ENCODE measurements at regions of chr19 and their contacts with region 1.

Region 1: DNA sequence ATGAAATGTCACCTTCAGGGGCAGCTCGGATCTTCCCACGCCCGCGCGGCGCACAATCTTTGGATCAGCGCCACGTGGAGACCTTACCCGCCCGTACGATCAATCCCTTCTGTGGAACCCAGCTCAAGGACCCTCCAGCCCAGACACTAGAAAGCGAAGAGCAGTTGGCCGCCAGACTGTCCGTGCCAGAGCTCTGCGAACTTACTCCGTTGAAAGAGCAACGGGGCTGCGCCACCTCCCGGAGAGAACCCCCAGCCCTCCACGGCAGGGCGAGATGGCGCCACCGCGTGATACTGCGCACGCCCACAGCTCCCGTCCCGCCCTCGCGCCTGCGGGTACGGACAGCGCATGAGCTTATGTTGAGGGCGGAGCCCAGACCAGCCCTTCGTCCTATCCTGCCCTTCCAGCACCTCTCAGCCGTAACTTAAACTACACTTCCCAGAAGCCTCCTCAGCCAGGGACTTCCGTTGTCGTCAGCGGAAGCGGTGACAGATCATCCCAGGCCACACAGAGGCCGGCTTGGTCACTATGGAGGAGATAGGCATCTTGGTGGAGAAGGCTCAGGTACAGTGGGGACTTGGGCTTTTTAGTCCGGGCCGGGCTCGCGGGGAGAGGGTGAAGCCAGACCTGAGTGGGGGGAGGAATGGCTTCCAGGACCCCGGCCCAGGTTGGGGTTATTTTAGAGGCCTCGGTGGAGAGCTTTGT is at the start of gene PSMC4:
- ATAC-seq: peak; percentile 93 to 98 (median 98)
- H3K4me3 ChIP-seq: peak within 1 kb of the TSS; percentile 69 to 91 (median 88)
- H3K27ac ChIP-seq: peak within 1 kb of the TSS; percentile 85 to 96
- H3K4me1 ChIP-seq: peaks cover 10 to 11% of the 10 kb centered on the region in 2 donors
- total RNA-seq, gene PSMC4: 86.5 to 155 (median 127) TPM

Region 2: GRCh38 chr19:39792999-39793546 is 177.8 kb before region 1 on chr19:
- in situ Hi-C with region 1: loop called in 2 of 9 experiments (anchors 25 kb)
- ATAC-seq: peak; percentile 97 to 99 (median 98)
- H3K4me3 ChIP-seq: peak overlapping the region; percentile 39 to 57 (median 55)
- H3K27ac ChIP-seq: no peak overlapping the region
- H3K4me1 ChIP-seq: no peaks in the 10 kb centered on the region

Region 3: GRCh38 chr19:39824143-39825092 is 146.4 kb before region 1 on chr19:
- in situ Hi-C with region 1: loop called in 1 of 9 experiments (anchors 25 kb)
- ATAC-seq: peak; percentile 88 to 97 (median 96)
- H3K4me3 ChIP-seq: peak overlapping the region; percentile 48 to 89 (median 61)
- H3K27ac ChIP-seq: peak overlapping the region; percentile 30 to 43
- H3K4me1 ChIP-seq: peaks cover 13 to 14% of the 10 kb centered on the region in 2 donors

Measured in motor neuron (in vitro differentiated cells).